Right ventricle myocardium superior (tissue), 1 donor: ENCODE measurements at regions of chr5 and their contacts with region 1.

Region 1: GRCh38 chr5:181159286-181159829 is 12.0 kb downstream of the OR2V2 start:
- DNase-seq: peak; percentile 91
- ATAC-seq: peak; percentile 97

Region 2: GRCh38 chr5:180784497-180785097 is 374.8 kb before region 1 on chr5:
- intact Hi-C with region 1: loop called (anchors 5 kb)
- DNase-seq: peak; percentile 85
- ATAC-seq: peak; percentile 88